CD14-positive monocyte (primary cell): ENCODE measurements at regions of chr12 and their contacts with region 1.

Region 1: GRCh38 chr12:54191550-54192022 is 2.8 kb upstream of the SMUG1 start:
- DNase-seq: peak; percentile 75 to 80 (median 78)
- H3K4me3 ChIP-seq: no peak overlapping the region
- H3K4me3 Mint-ChIP-seq: peak overlapping the region in 1 of 2 donors; percentile 63
- H3K27ac ChIP-seq: no peak overlapping the region
- H3K27ac Mint-ChIP-seq: no peak overlapping the region
- H3K4me1 ChIP-seq: peaks cover 29 to 45% of the 10 kb centered on the region in 2 donors
- H3K4me1 Mint-ChIP-seq: peaks cover 51% of the 10 kb centered on the region
- H3K27me3 ChIP-seq: peaks cover 7 to 26% of the 10 kb centered on the region in 2 donors
- H3K27me3 Mint-ChIP-seq: peaks cover 25 to 50% (median 39%) of the 10 kb centered on the region in 3 donors
- CTCF ChIP-seq: peak; percentile 91

Region 2: GRCh38 chr12:53727310-53728041 is 464.1 kb before region 1 on chr12 and contains the start of gene CALCOCO1:
- intact Hi-C with region 1: loop called in 1 of 2 experiments (anchors 5 kb)
- DNase-seq: peak; percentile 91 to 94 (median 94)
- H3K4me3 ChIP-seq: peak within 1 kb of the TSS; percentile 62 to 98 (median 62)
- H3K4me3 Mint-ChIP-seq: peak within 1 kb of the TSS; percentile 96 to 97
- H3K27ac ChIP-seq: peak within 1 kb of the TSS in 1 of 2 donors; percentile 81
- H3K27ac Mint-ChIP-seq: peak within 1 kb of the TSS; percentile 61 to 97 (median 92)
- H3K4me1 ChIP-seq: peaks cover 16 to 20% of the 10 kb centered on the region in 2 donors
- H3K4me1 Mint-ChIP-seq: peaks cover 15% of the 10 kb centered on the region
- H3K27me3 ChIP-seq: peaks cover 0 to 2% of the 10 kb centered on the region in 2 donors
- H3K27me3 Mint-ChIP-seq: peaks cover 4 to 13% (median 5%) of the 10 kb centered on the region in 3 donors
- CTCF ChIP-seq: no peak
- polyA plus RNA-seq, gene CALCOCO1: 60.1 to 238 (median 69.6) TPM

Region 3: DNA sequence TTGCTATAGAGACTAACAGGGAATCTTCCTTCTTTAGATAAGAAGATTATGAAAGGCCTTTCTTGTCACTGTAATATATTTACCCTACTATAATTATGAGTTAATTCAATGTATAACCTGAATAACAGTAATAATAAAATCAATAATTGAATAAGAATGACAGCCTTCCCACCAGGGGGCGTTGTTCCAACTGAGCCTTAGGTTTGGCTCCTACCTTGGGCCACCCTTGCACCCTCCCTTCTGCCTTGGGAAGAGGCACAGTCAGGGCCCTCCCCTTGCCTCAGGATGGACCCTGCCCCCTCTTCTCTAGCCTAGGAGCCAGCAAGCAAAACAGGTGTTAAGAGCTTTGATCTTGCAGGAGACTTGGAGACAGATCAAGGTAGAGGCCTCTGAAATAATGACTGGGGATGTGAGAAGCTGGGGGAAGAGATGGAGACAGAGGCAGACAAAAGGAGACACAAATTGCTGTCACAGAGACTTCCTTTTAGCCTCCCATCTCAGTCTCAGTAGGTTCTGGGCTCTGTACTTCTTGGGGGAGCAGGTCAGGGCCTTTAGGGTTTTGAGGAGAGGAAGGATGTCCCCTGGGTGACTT is 399.8 kb before region 1 on chr12:
- intact Hi-C with region 1: loop called in 1 of 2 experiments (anchors 5 kb)
- DNase-seq: peak; percentile 2 to 9 (median 8)
- H3K4me3 ChIP-seq: no peak overlapping the region
- H3K4me3 Mint-ChIP-seq: no peak overlapping the region
- H3K27ac ChIP-seq: no peak overlapping the region
- H3K27ac Mint-ChIP-seq: no peak overlapping the region
- H3K4me1 ChIP-seq: no peaks in the 10 kb centered on the region
- H3K4me1 Mint-ChIP-seq: no peaks in the 10 kb centered on the region
- H3K27me3 ChIP-seq: peaks cover 30 to 43% of the 10 kb centered on the region in 2 donors
- H3K27me3 Mint-ChIP-seq: peaks cover 13 to 35% (median 20%) of the 10 kb centered on the region in 3 donors
- CTCF ChIP-seq: peak; percentile 73